Caco-2 (cell line): ENCODE measurements at regions of chr18 and their contacts with region 1.

Region 1: GRCh38 chr18:12376718-12377555 is at the start of gene AFG3L2:
- DNase-seq: peak; percentile 100
- H3K4me3 ChIP-seq: peak within 1 kb of the TSS; percentile 92
- H3K4me3 Mint-ChIP-seq: peak within 1 kb of the TSS; percentile 80
- H3K27ac Mint-ChIP-seq: peak within 1 kb of the TSS; percentile 92
- H3K4me1 ChIP-seq: peaks cover 8% of the 10 kb centered on the region; the same call in 1 of the 2 replicates
- H3K4me1 Mint-ChIP-seq: no peaks in the 10 kb centered on the region
- H3K27me3 ChIP-seq: no peaks in the 10 kb centered on the region
- H3K27me3 Mint-ChIP-seq: no peaks in the 10 kb centered on the region
- CTCF ChIP-seq: no peak
- total RNA-seq, gene AFG3L2: 69.8 and 72.0 TPM in 2 replicates

Region 2: GRCh38 chr18:12278741-12279682 is 97.9 kb before region 1 on chr18:
- CTCF ChIA-PET with region 1: interaction called, 9 read pairs
- POLR2A ChIA-PET with region 1: interaction called, 12 read pairs
- intact Hi-C with region 1: no loop called
- DNase-seq: peak; percentile 86 to 90
- H3K4me3 ChIP-seq: peak overlapping the region; percentile 15
- H3K4me3 Mint-ChIP-seq: peak overlapping the region; percentile 60
- H3K27ac Mint-ChIP-seq: peak overlapping the region; percentile 95
- H3K4me1 ChIP-seq: peaks cover 32% of the 10 kb centered on the region
- H3K4me1 Mint-ChIP-seq: peaks cover 10% of the 10 kb centered on the region
- H3K27me3 ChIP-seq: no peaks in the 10 kb centered on the region
- H3K27me3 Mint-ChIP-seq: no peaks in the 10 kb centered on the region
- CTCF ChIP-seq: peak in 1 of 2 experiments; percentile 28

Region 3: DNA sequence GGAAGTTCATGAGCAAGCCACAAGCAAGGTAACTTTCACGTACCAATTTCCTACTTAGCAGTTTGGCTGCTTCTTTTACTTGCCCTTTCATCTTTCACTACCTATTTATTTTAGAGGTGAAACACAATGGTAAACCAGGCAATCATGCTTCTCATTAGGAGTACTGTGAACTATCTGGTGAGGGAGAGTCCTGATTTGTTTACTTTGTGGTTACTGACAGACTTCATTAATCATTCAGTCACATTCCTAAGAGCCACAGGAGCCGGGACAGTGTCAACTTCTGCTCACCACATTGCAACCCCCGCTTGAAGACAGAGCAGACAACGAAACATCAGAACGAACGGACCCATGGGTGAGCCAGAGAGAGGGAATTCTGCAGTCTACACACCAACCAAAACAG is 40.1 kb before region 1 on chr18:
- CTCF ChIA-PET with region 1: no interaction called
- POLR2A ChIA-PET with region 1: interaction called, 3 read pairs
- intact Hi-C with region 1: loop called (anchors 1 kb)
- DNase-seq: peak; percentile 68 to 72
- H3K4me3 ChIP-seq: no peak overlapping the region
- H3K4me3 Mint-ChIP-seq: peak overlapping the region; percentile 23
- H3K27ac Mint-ChIP-seq: peak overlapping the region; percentile 37
- H3K4me1 ChIP-seq: peaks cover 46% of the 10 kb centered on the region
- H3K4me1 Mint-ChIP-seq: peaks cover 37% of the 10 kb centered on the region
- H3K27me3 ChIP-seq: no peaks in the 10 kb centered on the region
- H3K27me3 Mint-ChIP-seq: no peaks in the 10 kb centered on the region
- CTCF ChIP-seq: no peak

Region 4: GRCh38 chr18:12408247-12408869 is 31.4 kb after region 1 on chr18:
- CTCF ChIA-PET with region 1: interaction called, 3 read pairs
- POLR2A ChIA-PET with region 1: interaction called, 24 read pairs
- intact Hi-C with region 1: no loop called
- DNase-seq: no peak
- H3K4me3 ChIP-seq: peak overlapping the region; percentile 55
- H3K4me3 Mint-ChIP-seq: peak overlapping the region; percentile 88
- H3K27ac Mint-ChIP-seq: no peak overlapping the region
- H3K4me1 ChIP-seq: peaks cover 11% of the 10 kb centered on the region; the same call in 1 of the 2 replicates
- H3K4me1 Mint-ChIP-seq: peaks cover 9% of the 10 kb centered on the region
- H3K27me3 ChIP-seq: no peaks in the 10 kb centered on the region
- H3K27me3 Mint-ChIP-seq: peaks cover 10% of the 10 kb centered on the region
- CTCF ChIP-seq: no peak

Region 5: DNA sequence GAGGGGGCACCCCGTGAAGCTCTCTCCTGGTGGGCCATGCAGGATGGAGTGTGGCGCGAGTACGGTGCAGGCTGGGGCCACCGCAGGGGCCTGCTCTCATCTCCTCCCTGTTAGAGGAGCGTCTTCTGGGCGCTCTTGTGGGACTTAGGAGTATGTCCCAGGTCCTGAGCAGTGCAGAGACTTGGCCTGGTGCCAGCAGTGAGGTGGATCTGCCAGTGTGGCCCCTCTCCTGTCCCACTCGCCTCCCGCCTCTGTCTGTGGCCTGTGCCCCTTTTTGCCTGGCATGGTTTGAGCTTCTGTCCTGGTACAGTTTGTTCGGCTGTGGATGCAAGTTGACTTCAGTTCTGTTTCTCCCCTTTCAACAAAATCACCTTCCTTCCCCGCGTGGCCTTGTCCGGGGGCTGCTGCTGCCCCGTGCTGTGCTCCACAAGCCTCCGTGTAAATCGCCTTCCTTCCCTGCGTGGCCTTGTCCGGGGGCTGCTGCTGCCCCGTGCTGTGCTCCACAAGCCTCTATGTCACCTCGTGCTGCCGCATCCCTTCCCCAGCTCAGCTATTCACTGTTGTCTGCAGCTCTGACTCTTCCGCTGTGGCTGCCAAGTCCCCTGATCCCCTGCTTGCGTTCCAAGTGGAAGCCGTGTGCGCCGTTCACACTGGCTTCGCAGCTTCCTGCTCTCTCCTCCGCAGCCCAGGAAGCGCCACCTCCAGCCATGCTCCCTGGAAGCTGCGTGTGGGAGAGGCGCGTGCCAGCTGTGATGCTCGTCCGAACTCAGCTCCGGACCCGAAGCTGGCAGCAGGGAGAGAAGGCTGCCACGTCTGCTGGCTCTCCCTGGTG is 855.4 kb after region 1 on chr18:
- CTCF ChIA-PET with region 1: no interaction called
- POLR2A ChIA-PET with region 1: no interaction called
- intact Hi-C with region 1: no loop called
- DNase-seq: no peak
- H3K4me3 ChIP-seq: no peak overlapping the region
- H3K4me3 Mint-ChIP-seq: no peak overlapping the region
- H3K27ac Mint-ChIP-seq: no peak overlapping the region
- H3K4me1 ChIP-seq: no peaks in the 10 kb centered on the region
- H3K4me1 Mint-ChIP-seq: no peaks in the 10 kb centered on the region
- H3K27me3 ChIP-seq: no peaks in the 10 kb centered on the region; the same call in 1 of the 2 replicates
- H3K27me3 Mint-ChIP-seq: peaks cover 16% of the 10 kb centered on the region
- CTCF ChIP-seq: no peak